PC-9 (cell line): ENCODE measurements at regions of chr13 and their contacts with region 1.

Region 1: DNA sequence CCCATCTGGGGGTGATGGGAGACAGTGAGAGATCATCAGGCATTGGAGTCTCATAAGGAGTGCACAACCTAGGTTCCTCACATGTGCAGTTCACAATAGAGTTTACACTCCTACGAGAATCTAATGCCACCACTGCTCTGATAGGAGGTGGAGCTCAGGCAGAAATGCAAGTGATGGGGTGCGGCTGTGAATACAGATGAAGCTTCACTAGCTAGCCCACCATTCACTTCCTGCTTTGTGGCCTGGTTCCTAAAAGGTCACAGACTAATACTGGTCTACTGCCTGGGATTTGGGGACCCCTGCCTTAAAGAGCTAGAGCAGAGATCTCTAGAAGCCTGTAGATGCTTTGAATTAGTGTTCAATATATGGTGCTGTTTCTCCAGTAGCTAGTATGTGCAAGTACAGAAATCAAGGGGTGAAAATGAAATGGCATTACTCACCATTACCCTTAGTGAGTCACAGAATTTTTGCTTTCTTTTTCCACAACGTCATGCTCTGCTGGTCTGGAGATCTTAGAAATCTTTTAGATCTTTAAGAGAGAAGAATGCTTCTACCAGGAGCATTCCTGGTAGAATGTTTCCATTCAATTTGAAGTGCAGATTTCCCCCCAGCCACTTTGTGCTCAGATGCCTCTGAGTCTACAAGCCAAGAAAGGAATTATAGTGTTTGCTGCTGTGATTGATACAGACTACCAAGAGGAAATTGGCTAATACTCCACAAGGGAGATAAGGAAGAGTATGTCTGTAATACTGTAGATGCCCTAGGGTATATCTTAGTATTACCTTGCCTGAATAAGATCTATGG is 2301.2 kb downstream of the PCDH9 start:
- DNase-seq: peak; percentile 34 to 44
- H3K4me3 ChIP-seq: 0 out of 2 replicates have a peak overlapping the region, but pooled peaks have one; percentile 21
- H3K27ac ChIP-seq: peak overlapping the region; percentile 35
- H3K4me1 ChIP-seq: peaks cover 13% of the 10 kb centered on the region; the same call in 1 of the 2 replicates
- H3K27me3 ChIP-seq: no peaks in the 10 kb centered on the region
- CTCF ChIP-seq: no peak

Region 2: GRCh38 chr13:64568748-64569147 is 360.1 kb before region 1 on chr13:
- CTCF ChIA-PET with region 1: interaction called, 15 read pairs
- POLR2A ChIA-PET with region 1: no interaction called
- intact Hi-C with region 1: no loop called
- DNase-seq: no peak
- H3K4me3 ChIP-seq: no peak overlapping the region
- H3K27ac ChIP-seq: no peak overlapping the region
- H3K4me1 ChIP-seq: no peaks in the 10 kb centered on the region
- H3K27me3 ChIP-seq: no peaks in the 10 kb centered on the region
- CTCF ChIP-seq: no peak

Region 3: DNA sequence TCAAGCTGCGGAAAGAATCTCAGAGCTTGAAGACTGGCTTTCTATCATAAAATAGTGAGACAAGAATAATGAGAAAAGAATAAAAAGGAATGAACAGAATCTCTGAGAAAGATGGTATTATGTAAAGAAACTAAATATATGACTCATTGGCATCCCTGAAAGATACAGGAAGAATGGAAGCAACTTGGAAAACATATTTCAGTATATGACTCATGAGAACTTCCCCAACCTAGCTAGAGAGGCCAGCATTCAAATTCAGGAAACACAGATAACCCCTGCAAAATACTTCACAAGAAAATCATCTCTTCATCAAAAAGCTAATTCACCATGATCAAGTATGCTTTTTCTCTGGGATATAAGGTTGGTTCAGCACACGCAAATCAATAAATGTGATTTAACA is 16.8 kb before region 1 on chr13:
- CTCF ChIA-PET with region 1: no interaction called
- POLR2A ChIA-PET with region 1: no interaction called
- intact Hi-C with region 1: loop called (anchors 1 kb)
- DNase-seq: peak in 1 of 2 experiments; percentile 36
- H3K4me3 ChIP-seq: no peak overlapping the region
- H3K27ac ChIP-seq: peak overlapping the region; percentile 65
- H3K4me1 ChIP-seq: peaks cover 11% of the 10 kb centered on the region; the same call in 1 of the 2 replicates
- H3K27me3 ChIP-seq: no peaks in the 10 kb centered on the region
- CTCF ChIP-seq: no peak